Aorta (tissue), 5 donors: ENCODE measurements at regions of chr11 and their contacts with region 1.

Region 1: DNA sequence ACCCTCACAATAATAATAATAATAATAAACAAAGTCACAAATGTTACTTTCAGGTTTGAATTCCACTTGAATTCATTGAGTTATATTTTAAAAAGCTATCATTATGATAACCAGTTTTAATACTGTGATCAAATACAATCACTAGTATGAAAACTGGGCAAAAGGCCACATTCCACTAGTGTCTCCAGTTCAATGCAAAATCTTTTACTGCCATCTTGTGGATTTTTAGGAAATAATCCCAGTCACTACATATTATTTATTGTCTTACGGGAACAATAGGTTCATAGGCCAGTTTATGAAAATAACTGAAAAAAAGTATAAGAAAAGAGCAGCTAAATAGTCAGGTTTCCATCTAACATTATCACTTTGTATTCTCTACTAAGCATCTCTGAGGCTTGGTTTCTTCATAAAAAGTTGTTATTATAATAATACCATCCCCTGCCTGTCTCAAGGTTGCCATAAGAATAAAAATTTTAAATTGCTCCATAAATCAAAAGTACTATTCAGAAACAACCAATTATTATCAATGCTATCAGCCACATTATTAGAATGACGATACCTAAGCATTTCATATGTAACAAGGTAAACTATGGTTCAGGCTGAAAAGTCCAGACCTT is 533.9 kb upstream of the CCDC90B start:
- DNase-seq: no peak
- ATAC-seq: peak; percentile 68
- H3K4me3 ChIP-seq: no peak overlapping the region
- H3K27ac ChIP-seq: no peak overlapping the region
- H3K4me1 ChIP-seq: no peaks in the 10 kb centered on the region
- H3K27me3 ChIP-seq: no peaks in the 10 kb centered on the region

Region 2: GRCh38 chr11:82682003-82682751 is 1137.9 kb before region 1 on chr11:
- intact Hi-C with region 1: loop called (anchors 10 kb)
- DNase-seq: no peak
- ATAC-seq: peak; percentile 83
- H3K4me3 ChIP-seq: no peak overlapping the region
- H3K27ac ChIP-seq: no peak overlapping the region
- H3K4me1 ChIP-seq: no peaks in the 10 kb centered on the region
- H3K27me3 ChIP-seq: peaks cover 0 to 2% of the 10 kb centered on the region in 2 donors

Region 3: GRCh38 chr11:82867495-82868082 is 952.5 kb before region 1 on chr11:
- intact Hi-C with region 1: loop called in 1 of 2 experiments (anchors 10 kb)
- DNase-seq: peak; percentile 68 to 72
- ATAC-seq: peak; percentile 82
- H3K4me3 ChIP-seq: peak overlapping the region in 1 of 2 donors; percentile 41
- H3K27ac ChIP-seq: no peak overlapping the region
- H3K4me1 ChIP-seq: peaks cover 0 to 4% of the 10 kb centered on the region in 2 donors
- H3K27me3 ChIP-seq: no peaks in the 10 kb centered on the region

Region 4: GRCh38 chr11:83292709-83293456 is 527.2 kb before region 1 on chr11:
- intact Hi-C with region 1: loop called (anchors 5 kb)
- DNase-seq: no peak
- ATAC-seq: peak; percentile 76
- H3K4me3 ChIP-seq: no peak overlapping the region
- H3K27ac ChIP-seq: no peak overlapping the region
- H3K4me1 ChIP-seq: no peaks in the 10 kb centered on the region
- H3K27me3 ChIP-seq: no peaks in the 10 kb centered on the region

Region 5: GRCh38 chr11:83299681-83300080 is 520.4 kb before region 1 on chr11:
- intact Hi-C with region 1: loop called (anchors 5 kb)
- DNase-seq: no peak
- ATAC-seq: no peak
- H3K4me3 ChIP-seq: no peak overlapping the region
- H3K27ac ChIP-seq: no peak overlapping the region
- H3K4me1 ChIP-seq: no peaks in the 10 kb centered on the region
- H3K27me3 ChIP-seq: no peaks in the 10 kb centered on the region

Region 6: DNA sequence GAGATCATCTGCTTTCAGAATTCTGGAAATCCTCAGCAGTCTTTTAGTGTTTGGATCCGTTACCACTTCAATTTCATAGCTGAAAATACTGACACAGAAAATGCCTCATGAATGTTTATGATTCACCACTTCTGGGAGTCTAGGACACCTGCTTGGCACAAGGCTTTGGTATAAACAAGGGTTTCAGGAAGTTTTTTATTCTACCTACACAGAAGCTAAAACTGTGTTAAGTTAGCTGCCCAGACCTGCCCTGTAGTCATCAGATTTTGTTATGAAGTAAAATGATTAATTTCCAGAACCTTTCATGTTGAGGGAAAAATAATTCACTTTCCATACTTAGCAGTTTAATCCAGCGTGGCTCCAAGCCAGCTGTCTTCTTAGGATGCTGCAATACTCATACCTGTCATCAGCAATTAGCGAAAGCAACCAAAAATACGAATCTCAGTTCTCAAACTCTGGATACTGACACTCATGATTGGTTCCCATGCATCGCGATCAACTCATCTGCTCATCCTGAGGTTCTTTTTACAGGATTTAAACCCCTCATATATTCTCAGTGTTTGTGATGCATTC is 75.3 kb before region 1 on chr11:
- intact Hi-C with region 1: no loop called
- DNase-seq: no peak
- ATAC-seq: no peak
- H3K4me3 ChIP-seq: no peak overlapping the region
- H3K27ac ChIP-seq: no peak overlapping the region
- H3K4me1 ChIP-seq: no peaks in the 10 kb centered on the region
- H3K27me3 ChIP-seq: no peaks in the 10 kb centered on the region